OCI-LY7 (cell line): ENCODE measurements at regions of chr21 and their contacts with region 1.

Region 1: GRCh38 chr21:29477941-29478340 is 179.2 kb downstream of the BACH1 start:
- DNase-seq: no peak
- H3K4me3 ChIP-seq: no peak overlapping the region
- H3K27ac ChIP-seq: no peak overlapping the region
- H3K4me1 ChIP-seq: peaks cover 4% of the 10 kb centered on the region
- CTCF ChIP-seq: no peak

Region 2: GRCh38 chr21:29647353-29647781 is 169.4 kb after region 1 on chr21:
- CTCF ChIA-PET with region 1: no interaction called
- POLR2A ChIA-PET with region 1: no interaction called
- intact Hi-C with region 1: no loop called
- DNase-seq: no peak
- H3K4me3 ChIP-seq: no peak overlapping the region
- H3K27ac ChIP-seq: no peak overlapping the region
- H3K4me1 ChIP-seq: no peaks in the 10 kb centered on the region
- CTCF ChIP-seq: no peak

Region 3: GRCh38 chr21:29849735-29850176 is 371.8 kb after region 1 on chr21:
- CTCF ChIA-PET with region 1: interaction called, 3 read pairs
- POLR2A ChIA-PET with region 1: interaction called, 4 read pairs
- intact Hi-C with region 1: loop called (anchors 1 kb)
- DNase-seq: peak; percentile 70
- H3K4me3 ChIP-seq: no peak overlapping the region
- H3K27ac ChIP-seq: no peak overlapping the region
- H3K4me1 ChIP-seq: no peaks in the 10 kb centered on the region
- CTCF ChIP-seq: peak; percentile 88

Region 4: DNA sequence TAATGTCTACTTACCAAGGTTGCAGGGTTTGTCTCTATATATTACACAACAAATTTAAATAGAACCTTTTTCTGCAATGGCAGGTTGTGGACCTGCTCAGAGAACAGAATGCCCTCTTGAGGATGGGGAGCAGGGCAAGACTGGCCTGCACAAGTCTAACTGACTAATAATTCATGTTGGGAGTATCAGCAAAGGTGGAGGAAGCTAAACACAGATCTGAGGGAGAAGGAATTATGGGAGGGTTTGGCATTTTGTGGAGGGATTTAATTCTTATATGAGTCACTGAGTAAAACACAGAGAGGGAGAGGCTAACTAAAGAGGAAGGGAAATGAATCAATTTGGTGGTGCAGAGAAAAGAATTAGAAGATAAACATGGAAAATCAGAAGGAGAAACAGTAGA is 648.6 kb after region 1 on chr21:
- CTCF ChIA-PET with region 1: no interaction called
- POLR2A ChIA-PET with region 1: interaction called, 11 read pairs
- intact Hi-C with region 1: no loop called
- DNase-seq: no peak
- H3K4me3 ChIP-seq: no peak overlapping the region
- H3K27ac ChIP-seq: no peak overlapping the region
- H3K4me1 ChIP-seq: no peaks in the 10 kb centered on the region
- CTCF ChIP-seq: no peak